ENCODE measurements at regions of chr7 and their contacts with region 1.

Region 1: GRCh38 chr7:44534501-44534900 is 6.6 kb downstream of the NPC1L1 start:
- DNase-seq: peak; percentile 89
- H3K4me3 ChIP-seq: no peak overlapping the region
- H3K27ac ChIP-seq: no peak overlapping the region
- H3K4me1 ChIP-seq: no peaks in the 10 kb centered on the region
- H3K27me3 ChIP-seq: no peaks in the 10 kb centered on the region
- CTCF ChIP-seq: peak; percentile 73
- EP300 ChIP-seq: no peak
- RAD21 ChIP-seq: peak; percentile 41

Region 2: DNA sequence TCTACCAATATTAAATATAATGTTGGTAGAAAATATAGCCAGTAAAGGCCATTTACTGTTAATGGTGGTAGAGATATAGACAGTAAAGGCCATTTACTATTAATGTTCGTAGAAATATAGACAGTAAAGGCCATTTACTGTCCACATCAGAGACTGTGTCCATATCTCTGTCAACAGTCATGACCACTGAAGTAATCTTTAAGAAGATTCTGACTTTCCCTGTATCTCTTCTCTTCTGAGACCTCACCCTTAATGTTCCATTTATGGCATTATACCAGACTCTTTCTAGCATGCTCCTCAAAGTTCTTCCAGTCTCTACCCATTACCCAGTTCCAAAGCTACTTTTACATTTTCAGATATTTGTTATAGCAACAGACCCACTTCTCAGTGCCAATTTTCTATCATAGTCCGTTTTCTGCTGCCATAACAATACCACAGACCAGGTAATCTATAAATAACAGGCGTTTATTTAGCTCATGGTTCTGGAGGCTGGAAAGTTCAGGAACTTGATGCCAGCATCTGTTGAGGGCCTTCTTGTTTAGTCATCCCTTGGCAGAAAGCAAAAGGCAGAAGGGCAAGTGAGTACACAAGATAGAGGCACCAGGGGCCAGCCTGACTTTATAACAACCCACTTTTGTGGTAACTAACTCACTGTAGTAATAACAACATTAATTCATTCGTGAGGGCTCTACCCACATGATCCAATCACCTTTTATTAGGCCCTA is 36.1 kb before region 1 on chr7:
- CTCF ChIA-PET with region 1: interaction called, 10 read pairs
- POLR2A ChIA-PET with region 1: no interaction called
- DNase-seq: no peak
- H3K4me3 ChIP-seq: no peak overlapping the region
- H3K27ac ChIP-seq: no peak overlapping the region
- H3K4me1 ChIP-seq: no peaks in the 10 kb centered on the region
- H3K27me3 ChIP-seq: no peaks in the 10 kb centered on the region; the same call in 1 of the 2 replicates
- CTCF ChIP-seq: no peak
- EP300 ChIP-seq: no peak
- RAD21 ChIP-seq: no peak

Region 3: GRCh38 chr7:44508328-44509030 is 26.0 kb before region 1 on chr7:
- CTCF ChIA-PET with region 1: interaction called, 10 read pairs
- POLR2A ChIA-PET with region 1: no interaction called
- DNase-seq: no peak
- H3K4me3 ChIP-seq: no peak overlapping the region
- H3K27ac ChIP-seq: no peak overlapping the region
- H3K4me1 ChIP-seq: no peaks in the 10 kb centered on the region
- H3K27me3 ChIP-seq: no peaks in the 10 kb centered on the region; the same call in 1 of the 2 replicates
- CTCF ChIP-seq: no peak
- EP300 ChIP-seq: no peak
- RAD21 ChIP-seq: no peak

Region 4: DNA sequence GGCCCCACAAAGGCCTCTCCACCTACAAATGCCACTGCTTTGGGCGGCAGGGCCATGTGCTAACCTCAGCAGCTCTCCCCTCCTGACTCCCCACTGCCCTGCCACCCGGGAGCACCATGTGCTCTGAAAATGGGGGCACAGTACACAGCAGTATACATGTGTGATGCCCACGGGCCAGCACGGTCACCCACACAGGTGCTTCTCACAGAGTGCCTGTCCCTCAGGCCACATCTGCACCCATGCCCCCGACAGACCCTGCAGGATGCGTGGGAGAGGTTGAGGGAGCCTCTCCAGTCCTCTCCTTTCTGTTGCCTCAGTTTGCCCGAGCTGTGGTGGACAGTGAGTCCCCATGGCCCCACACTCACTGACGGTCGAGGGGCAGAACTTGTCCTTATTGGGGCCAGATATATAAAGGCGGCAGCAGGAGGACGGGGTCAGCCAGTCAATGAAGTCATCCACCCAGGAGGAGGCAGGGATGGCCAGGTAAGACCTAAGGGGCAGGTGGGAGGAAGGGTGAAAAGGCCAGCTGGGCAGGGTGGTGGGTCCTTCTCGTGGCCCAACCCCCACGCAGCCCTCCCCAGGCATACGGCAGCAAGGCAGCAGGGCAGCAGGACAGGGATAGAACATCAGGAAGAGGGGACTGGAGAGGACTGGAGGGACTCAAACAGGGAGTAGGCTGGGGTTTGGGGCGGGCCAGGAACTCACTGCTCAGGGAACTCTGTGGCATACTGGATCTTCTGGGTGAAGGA is 13.0 kb before region 1 on chr7:
- CTCF ChIA-PET with region 1: interaction called, 26 read pairs
- POLR2A ChIA-PET with region 1: no interaction called
- DNase-seq: no peak
- H3K4me3 ChIP-seq: no peak overlapping the region
- H3K27ac ChIP-seq: no peak overlapping the region
- H3K4me1 ChIP-seq: no peaks in the 10 kb centered on the region
- H3K27me3 ChIP-seq: peaks cover 14% of the 10 kb centered on the region; the same call in 1 of the 2 replicates
- CTCF ChIP-seq: no peak
- EP300 ChIP-seq: no peak
- RAD21 ChIP-seq: no peak

Region 5: GRCh38 chr7:44547536-44548231 is 13.2 kb after region 1 on chr7:
- CTCF ChIA-PET with region 1: interaction called, 34 read pairs
- POLR2A ChIA-PET with region 1: no interaction called
- DNase-seq: no peak
- H3K4me3 ChIP-seq: no peak overlapping the region
- H3K27ac ChIP-seq: no peak overlapping the region
- H3K4me1 ChIP-seq: no peaks in the 10 kb centered on the region
- H3K27me3 ChIP-seq: 0 out of 2 replicates have a peak, but pooled peaks cover 8% of the 10 kb centered on the region
- CTCF ChIP-seq: no peak
- EP300 ChIP-seq: no peak
- RAD21 ChIP-seq: no peak

Region 6: DNA sequence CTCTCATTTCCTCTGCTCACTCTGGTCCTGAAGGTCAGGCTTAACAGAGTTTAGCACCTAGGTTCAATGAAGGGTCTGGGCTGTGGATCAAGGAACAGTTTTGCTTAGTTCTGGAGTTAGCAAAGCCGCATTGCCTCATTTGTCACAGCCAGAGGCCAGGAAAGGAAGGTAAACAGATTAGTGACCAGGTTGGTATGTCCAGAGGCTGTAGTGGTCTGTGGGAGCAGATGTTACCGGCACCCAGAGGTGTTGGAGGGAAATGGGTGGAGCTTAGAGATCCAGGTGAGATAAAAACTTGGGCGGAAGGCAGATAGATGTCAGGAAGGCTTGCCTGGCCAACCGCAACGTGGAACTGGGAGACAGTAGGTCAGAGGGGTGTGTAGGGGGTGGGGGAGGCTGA is 177.5 kb after region 1 on chr7:
- CTCF ChIA-PET with region 1: no interaction called
- POLR2A ChIA-PET with region 1: no interaction called
- DNase-seq: no peak
- H3K4me3 ChIP-seq: no peak overlapping the region
- H3K27ac ChIP-seq: no peak overlapping the region
- H3K4me1 ChIP-seq: no peaks in the 10 kb centered on the region; a peak in 1 of 4 replicates
- H3K27me3 ChIP-seq: no peaks in the 10 kb centered on the region
- CTCF ChIP-seq: no peak
- EP300 ChIP-seq: no peak
- RAD21 ChIP-seq: no peak

Region 7: DNA sequence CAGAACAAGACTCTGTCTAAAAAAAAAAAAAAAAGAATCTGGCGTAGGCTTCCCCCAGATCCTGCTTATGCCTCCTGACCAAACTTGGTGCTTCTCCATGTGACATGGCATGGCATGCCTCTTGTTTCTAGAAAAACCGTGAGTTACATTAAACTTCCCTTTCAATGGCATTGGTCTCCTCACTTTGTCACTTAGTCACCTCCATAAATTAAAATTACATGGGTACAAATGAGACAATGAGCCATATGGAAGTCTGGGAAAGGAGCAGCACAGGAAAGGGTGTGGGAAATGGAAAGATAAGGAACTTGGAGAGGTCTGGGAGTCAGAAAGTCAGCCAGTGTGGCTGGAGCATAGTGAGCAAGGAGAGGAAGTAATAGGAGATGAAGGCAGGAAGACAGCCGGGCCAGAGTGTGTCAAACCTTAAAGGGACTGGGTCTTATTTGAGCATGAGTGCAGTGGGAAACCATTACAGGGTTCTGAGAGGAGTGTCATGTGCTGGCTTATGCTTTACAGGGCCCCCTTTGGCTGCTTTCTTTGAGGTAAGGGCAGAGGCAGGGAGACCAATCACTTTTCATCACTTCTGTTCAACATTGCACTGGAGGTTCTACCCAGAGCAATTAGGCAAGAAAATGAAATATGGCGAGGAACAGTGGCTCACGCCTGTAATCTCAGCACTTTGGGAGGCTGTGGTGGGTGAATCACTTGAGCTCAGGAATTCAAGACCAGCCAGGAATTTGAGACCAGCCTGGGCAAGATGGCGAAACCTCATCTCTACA is 192.8 kb after region 1 on chr7:
- CTCF ChIA-PET with region 1: no interaction called
- POLR2A ChIA-PET with region 1: no interaction called
- DNase-seq: no peak
- H3K4me3 ChIP-seq: no peak overlapping the region
- H3K27ac ChIP-seq: peak overlapping the region in 1 of 2 experiments; percentile 62; a peak in 2 of 4 replicates
- H3K4me1 ChIP-seq: no peaks in the 10 kb centered on the region; a peak in 1 of 4 replicates
- H3K27me3 ChIP-seq: no peaks in the 10 kb centered on the region
- CTCF ChIP-seq: no peak
- EP300 ChIP-seq: no peak
- RAD21 ChIP-seq: no peak

Measured in SK-N-SH (cell line).